Activated naive CD4-positive, alpha-beta T cell treated with anti-CD3 and anti-CD28 coated beads for 36 hours (primary cell): ENCODE measurements at regions of chr6 and their contacts with region 1.

Region 1: DNA sequence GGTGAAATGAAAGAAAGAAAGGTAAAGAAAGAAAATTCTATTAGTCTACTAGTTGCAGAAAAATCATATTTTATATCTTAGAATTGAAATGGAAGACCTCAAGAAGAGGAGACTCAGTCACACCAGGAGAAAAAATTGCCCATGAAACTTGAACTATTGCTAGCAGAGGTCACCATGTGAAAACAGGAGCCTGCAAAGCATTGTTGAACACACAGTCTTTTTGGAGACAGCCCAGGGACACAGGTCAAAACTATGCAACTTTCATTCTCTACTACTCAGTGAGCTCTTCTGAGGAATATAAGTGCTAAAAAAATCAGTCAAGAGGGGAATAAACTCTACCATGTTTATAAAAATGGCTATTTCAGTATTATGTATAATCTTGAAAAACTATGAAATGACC is 89.8 kb upstream of the TENT5A start:
- DNase-seq: no peak
- H3K4me3 Mint-ChIP-seq: no peak overlapping the region
- H3K27ac Mint-ChIP-seq: no peak overlapping the region
- H3K4me1 Mint-ChIP-seq: no peaks in the 10 kb centered on the region
- H3K27me3 Mint-ChIP-seq: peaks cover 3% of the 10 kb centered on the region

Region 2: GRCh38 chr6:81214414-81215091 is 627.7 kb before region 1 on chr6:
- CTCF ChIA-PET with region 1: no interaction called
- intact Hi-C with region 1: no loop called
- DNase-seq: no peak
- H3K4me3 Mint-ChIP-seq: no peak overlapping the region
- H3K27ac Mint-ChIP-seq: no peak overlapping the region
- H3K4me1 Mint-ChIP-seq: no peaks in the 10 kb centered on the region
- H3K27me3 Mint-ChIP-seq: no peaks in the 10 kb centered on the region

Region 3: DNA sequence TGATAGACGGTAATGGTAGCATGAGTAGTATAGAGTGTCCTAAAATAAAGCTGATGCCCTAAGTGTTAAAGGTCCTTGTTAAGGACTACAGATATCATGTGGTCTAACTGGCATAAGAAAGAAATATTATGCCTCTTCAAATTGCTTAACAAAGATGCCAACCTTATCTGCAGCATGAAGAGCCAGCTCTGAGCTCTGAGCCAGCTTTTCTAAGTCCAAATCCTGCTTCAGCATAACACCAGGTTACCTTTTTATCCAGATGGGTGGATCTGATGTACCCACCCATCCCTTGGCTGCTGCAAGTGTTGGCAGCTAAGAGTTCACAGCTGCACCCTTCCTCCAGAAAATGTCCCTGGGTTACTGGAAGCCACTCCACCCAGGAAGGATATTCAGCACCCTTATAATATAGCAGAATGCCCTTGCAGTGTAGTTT is 173.6 kb before region 1 on chr6:
- CTCF ChIA-PET with region 1: no interaction called
- intact Hi-C with region 1: no loop called
- DNase-seq: no peak
- H3K4me3 Mint-ChIP-seq: no peak overlapping the region
- H3K27ac Mint-ChIP-seq: no peak overlapping the region
- H3K4me1 Mint-ChIP-seq: no peaks in the 10 kb centered on the region
- H3K27me3 Mint-ChIP-seq: no peaks in the 10 kb centered on the region

Region 4: DNA sequence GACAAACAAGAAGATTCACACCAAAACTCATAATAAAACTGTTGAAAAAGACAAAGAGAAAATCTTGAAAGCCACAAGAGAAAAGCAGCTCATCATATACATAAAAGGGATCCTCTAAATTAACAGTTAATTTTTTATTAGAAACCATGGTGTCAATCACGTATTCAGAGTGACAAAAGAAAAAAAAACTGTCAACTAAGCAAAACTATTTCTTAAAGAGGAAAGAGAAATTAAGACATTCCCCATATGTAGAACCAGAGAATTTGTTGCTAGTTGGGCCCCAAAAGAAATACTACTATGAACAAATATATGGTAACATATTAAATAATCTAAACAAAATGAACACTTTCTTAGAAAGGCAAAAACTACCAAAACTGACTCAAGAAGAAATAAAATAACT is 15.5 kb before region 1 on chr6:
- CTCF ChIA-PET with region 1: no interaction called
- intact Hi-C with region 1: loop called (anchors 1 kb)
- DNase-seq: no peak
- H3K4me3 Mint-ChIP-seq: no peak overlapping the region
- H3K27ac Mint-ChIP-seq: no peak overlapping the region
- H3K4me1 Mint-ChIP-seq: no peaks in the 10 kb centered on the region
- H3K27me3 Mint-ChIP-seq: peaks cover 4% of the 10 kb centered on the region

Region 5: DNA sequence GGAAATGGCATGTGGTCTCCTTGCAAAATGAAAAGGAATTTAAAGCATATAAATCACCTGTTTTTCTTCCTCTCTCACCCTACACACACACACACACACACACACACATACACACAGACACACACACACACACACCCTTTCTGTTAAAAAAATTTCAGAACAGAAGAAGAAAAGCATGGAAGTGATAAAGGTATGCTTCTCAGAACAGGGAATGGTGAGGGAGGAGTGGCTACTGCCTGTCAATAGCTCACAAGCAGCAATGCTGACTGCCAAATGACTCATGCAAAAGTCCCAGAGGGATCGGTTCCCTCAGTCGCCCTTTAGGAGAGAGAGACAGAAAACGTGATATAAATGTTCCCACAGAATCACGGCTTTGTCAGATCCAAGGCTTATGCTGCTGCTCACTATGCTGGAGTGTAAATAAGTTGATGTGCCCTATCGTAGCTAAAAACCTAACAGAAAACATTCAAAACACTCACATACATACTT is 302.6 kb after region 1 on chr6:
- CTCF ChIA-PET with region 1: no interaction called
- intact Hi-C with region 1: no loop called
- DNase-seq: no peak
- H3K4me3 Mint-ChIP-seq: no peak overlapping the region
- H3K27ac Mint-ChIP-seq: no peak overlapping the region
- H3K4me1 Mint-ChIP-seq: no peaks in the 10 kb centered on the region
- H3K27me3 Mint-ChIP-seq: peaks cover 4% of the 10 kb centered on the region